T-cell (primary cell): ENCODE measurements at regions of chr12 and their contacts with region 1.

Region 1: DNA sequence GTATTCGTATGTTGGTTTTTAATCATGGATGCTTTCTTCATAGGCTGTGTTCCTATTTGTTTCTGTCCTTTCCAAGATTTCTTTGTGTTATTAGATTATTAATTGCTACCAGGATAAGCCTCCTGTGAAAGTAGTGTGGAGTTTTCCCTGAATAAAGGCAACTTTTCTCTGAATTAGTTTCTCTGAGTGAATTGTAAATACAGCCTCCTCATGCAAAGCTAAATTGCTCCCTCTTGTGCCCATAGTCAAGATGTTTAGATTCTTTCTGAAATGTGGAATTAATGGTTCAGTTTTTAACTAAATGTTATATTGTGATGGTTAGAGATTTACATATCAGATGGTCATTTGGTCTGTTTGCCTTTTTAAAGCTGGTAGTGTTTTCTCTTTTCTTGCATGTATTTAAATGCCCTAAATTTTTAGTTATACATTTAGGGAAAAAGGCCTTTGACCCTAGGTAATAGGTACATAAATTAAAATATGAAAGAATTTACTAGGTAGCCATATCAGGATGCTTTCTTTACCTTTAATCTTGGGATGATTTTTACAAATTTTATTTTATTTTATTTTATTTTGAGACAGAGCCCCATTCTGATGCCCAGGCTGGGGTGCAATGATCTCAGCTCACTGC is 8.9 kb downstream of the APAF1 start:
- DNase-seq: peak in 4 of 35 experiments; percentile 12 to 73 (median 18)
- ATAC-seq: peak in 3 of 4 experiments; percentile 37 to 63 (median 49)
- H3K4me3 ChIP-seq: no peak overlapping the region
- H3K4me3 Mint-ChIP-seq: no peak overlapping the region
- H3K27ac ChIP-seq: no peak overlapping the region
- H3K27ac Mint-ChIP-seq: no peak overlapping the region
- H3K4me1 ChIP-seq: no peaks in the 10 kb centered on the region
- H3K4me1 Mint-ChIP-seq: peaks cover 13 to 16% (median 14%) of the 10 kb centered on the region in 3 donors
- H3K27me3 ChIP-seq: no peaks in the 10 kb centered on the region
- H3K27me3 Mint-ChIP-seq: no peaks in the 10 kb centered on the region

Region 2: DNA sequence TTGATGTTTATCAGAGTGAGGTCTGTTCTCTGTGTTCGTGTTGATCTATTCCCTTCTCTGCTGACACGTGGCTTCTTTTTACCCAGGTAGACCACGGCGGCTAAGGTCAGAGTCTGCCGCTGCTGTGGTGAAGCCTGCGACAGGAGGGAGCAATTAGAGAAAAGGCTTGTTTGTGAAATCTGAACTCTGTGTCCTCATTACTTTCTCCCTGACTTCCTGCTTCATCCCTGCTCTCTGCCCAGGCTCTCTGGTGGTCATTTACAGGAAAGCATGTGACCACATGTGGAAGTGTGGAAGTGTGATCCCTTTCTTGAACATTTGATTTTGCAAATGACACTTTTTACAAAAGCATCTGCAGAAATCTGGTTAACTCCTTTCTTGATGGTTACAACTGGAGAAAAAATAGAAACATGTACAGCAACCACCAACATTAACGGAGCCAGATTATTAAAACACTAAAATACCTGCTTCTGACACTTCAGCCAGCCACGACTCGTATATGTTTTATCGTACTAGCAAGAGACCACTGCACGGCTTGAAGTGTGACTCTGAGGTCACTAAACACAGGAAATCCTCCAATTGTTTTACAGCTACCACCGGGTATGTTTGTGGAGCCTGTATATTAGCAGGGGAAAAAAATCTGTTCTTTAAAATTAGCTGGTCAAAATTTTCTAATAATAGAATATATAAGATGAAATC is 527.2 kb before region 1 on chr12:
- CTCF ChIA-PET with region 1: no interaction called
- POLR2A ChIA-PET with region 1: no interaction called
- DNase-seq: no peak
- ATAC-seq: no peak
- H3K4me3 ChIP-seq: no peak overlapping the region
- H3K4me3 Mint-ChIP-seq: no peak overlapping the region
- H3K27ac ChIP-seq: no peak overlapping the region
- H3K27ac Mint-ChIP-seq: no peak overlapping the region
- H3K4me1 ChIP-seq: no peaks in the 10 kb centered on the region
- H3K4me1 Mint-ChIP-seq: no peaks in the 10 kb centered on the region
- H3K27me3 ChIP-seq: no peaks in the 10 kb centered on the region
- H3K27me3 Mint-ChIP-seq: peaks cover 5 to 16% of the 10 kb centered on the region in 2 donors

Region 3: DNA sequence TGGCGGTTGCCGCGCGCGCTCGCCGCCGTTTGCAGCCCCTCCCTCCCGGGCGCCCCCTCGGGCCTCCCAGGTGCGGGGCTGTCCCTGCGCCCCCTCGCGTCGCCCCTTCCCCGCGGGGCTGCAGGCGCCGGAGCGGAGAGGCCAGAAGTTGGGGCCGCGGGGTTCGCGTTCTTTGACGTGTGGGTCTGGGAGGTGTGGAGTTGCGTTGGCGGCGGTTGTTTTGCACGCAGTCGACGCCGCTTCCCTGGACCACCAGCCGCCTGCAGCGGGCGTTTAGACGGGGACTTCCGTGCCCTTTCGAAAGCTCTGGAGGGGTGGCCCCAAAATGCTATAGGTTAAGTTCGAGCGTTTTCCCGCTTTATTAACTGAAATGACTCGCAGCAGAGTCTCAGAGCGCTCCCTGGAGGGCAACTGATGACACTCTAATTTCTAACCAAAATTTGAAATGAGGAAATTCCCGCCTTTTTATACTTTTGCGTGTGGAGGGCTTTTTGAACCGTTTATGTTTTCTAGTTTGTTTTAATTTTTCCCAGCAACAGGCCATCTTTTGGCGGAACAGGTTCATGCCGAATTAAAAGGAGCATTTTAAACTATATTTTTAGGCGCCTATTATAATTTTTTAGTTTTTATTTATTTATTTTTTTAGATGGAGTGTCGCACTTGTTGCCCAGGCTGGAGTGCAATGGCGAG is 137.7 kb before region 1 on chr12:
- CTCF ChIA-PET with region 1: interaction called in 1 of 2 experiments, 12 read pairs
- POLR2A ChIA-PET with region 1: no interaction called
- DNase-seq: peak; percentile 55 to 93 (median 81)
- ATAC-seq: peak; percentile 51 to 66 (median 56)
- H3K4me3 ChIP-seq: peak overlapping the region; percentile 74 to 99
- H3K4me3 Mint-ChIP-seq: peak overlapping the region; percentile 97 to 99 (median 99)
- H3K27ac ChIP-seq: peak overlapping the region; percentile 53
- H3K27ac Mint-ChIP-seq: peak overlapping the region; percentile 98
- H3K4me1 ChIP-seq: peaks cover 23 to 44% of the 10 kb centered on the region in 2 experiments
- H3K4me1 Mint-ChIP-seq: peaks cover 53 to 60% (median 54%) of the 10 kb centered on the region in 3 donors
- H3K27me3 ChIP-seq: no peaks in the 10 kb centered on the region
- H3K27me3 Mint-ChIP-seq: no peaks in the 10 kb centered on the region